Astrocyte of the cerebellum (primary cell): ENCODE measurements at regions of chr17 and their contacts with region 1.

Region 1: GRCh38 chr17:59277031-59277430 is 54.4 kb upstream of the YPEL2 start:
- DNase-seq: no peak
- H3K4me3 ChIP-seq: no peak overlapping the region
- CTCF ChIP-seq: no peak

Region 2: DNA sequence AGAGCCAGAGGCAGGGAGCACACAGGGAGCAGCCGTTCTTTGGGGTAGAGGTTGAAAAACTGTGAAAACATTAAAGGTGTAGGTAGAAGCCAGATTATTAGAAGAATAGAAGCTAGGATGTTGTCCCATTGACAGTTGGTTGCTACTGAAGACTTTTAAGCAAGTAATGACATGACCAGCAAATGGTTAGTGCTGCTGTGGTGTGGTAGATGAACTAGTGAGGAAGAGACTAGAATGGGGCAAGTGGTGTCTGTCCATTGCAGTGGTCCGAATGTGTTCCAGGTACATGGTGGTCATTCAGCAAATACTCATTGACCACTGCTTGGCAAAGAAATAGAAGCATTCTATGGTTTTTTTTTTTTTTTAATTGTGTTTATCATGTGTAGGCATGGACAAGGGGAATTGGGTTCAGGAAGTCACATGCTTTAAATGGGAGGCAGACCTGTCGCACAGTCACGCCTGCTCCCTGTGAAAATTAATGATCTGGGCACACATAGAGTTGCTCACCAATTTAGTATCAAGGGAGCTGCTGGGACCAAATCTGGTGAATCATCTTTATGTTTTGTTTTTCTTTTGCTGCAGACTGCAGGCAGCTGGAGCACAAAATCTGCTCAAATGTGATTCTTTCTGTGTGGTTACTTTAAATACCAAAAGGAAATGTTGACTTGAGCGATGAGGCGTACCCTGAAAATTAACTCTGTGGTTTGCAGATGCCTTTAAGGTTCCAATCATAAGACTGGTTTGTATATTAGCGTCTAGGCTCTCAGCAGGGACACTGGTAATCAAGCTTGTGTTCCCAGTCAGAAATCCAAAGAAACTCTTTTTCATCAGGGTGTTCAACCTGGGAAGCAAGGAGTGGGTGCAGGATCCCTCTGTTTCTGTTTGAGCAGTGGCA is 85.1 kb after region 1 on chr17:
- in situ Hi-C with region 1: loop called (anchors 10 kb)
- DNase-seq: peak; percentile 96
- H3K4me3 ChIP-seq: no peak overlapping the region
- CTCF ChIP-seq: no peak